Stomach (tissue), 19 donors: ENCODE measurements at regions of chr3 and their contacts with region 1.

Region 1: GRCh38 chr3:43155464-43156121 is 49.7 kb upstream of the POMGNT2 start:
- DNase-seq: peak; percentile 60 to 82
- H3K4me3 ChIP-seq: no peak overlapping the region
- H3K27ac ChIP-seq: no peak overlapping the region
- H3K4me1 ChIP-seq: peaks cover 3 to 18% (median 10%) of the 10 kb centered on the region in 4 donors
- H3K27me3 ChIP-seq: no peaks in the 10 kb centered on the region
- CTCF ChIP-seq: peak in 5 of 7 experiments; percentile 43 to 63 (median 55)
- EP300 ChIP-seq: no peak
- POLR2A ChIP-seq: no peak

Region 2: GRCh38 chr3:42961633-42962032 is 194.0 kb before region 1 on chr3:
- intact Hi-C with region 1: loop called (anchors 5 kb)
- DNase-seq: peak; percentile 29 to 86
- H3K4me3 ChIP-seq: no peak overlapping the region
- H3K27ac ChIP-seq: no peak overlapping the region
- H3K4me1 ChIP-seq: peaks cover 0 to 7% (median 3%) of the 10 kb centered on the region in 4 donors
- H3K27me3 ChIP-seq: no peaks in the 10 kb centered on the region
- CTCF ChIP-seq: peak in 5 of 7 experiments; percentile 37 to 71 (median 62)
- EP300 ChIP-seq: no peak
- POLR2A ChIP-seq: no peak

Region 3: DNA sequence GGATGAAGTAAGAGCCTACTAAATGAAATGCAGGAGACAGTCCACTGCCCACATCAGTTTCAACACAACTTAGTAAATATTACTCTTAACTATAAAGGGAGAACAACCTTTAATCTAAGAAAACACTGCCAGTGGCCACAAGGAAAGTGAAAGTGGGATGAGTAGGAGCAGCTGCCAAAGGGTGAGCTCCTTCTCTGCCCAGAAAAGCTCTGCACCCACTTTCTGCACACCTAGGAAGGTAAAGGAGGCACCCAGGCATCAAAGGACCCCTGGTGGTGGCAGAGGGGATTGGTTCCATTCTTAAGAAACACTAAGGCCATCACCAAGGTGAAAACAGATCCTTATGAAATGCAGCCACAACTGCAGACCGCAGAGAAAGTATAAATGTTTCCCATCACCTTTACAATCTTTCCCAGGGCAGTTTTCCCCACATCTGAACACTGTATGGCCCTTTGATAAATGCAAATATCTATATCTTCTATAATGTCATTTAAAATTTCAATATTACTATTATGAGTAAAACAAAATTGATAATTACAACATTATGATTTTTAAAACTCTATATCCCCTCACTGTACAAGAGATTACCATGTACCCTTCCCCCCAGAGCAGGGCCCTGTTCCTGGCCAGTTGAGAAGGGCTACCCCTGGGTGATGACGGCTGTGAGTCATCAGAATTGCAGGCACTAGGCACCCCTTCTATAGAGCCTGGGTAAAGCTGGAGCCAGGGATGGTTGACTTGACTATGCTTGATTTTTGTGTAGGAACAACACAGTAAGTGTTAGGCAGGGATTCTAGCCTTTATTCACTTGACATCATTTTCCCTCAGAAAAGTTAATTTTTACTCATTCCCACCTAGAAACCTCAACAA is 222.7 kb after region 1 on chr3:
- intact Hi-C with region 1: loop called (anchors 10 kb)
- DNase-seq: peak; percentile 75 to 78
- H3K4me3 ChIP-seq: no peak overlapping the region
- H3K27ac ChIP-seq: peak overlapping the region in 3 of 5 donors; percentile 55 to 79 (median 57)
- H3K4me1 ChIP-seq: peaks cover 0 to 21% (median 8%) of the 10 kb centered on the region in 4 donors
- H3K27me3 ChIP-seq: no peaks in the 10 kb centered on the region
- CTCF ChIP-seq: peak in 5 of 7 experiments; percentile 32 to 75 (median 63)
- EP300 ChIP-seq: no peak
- POLR2A ChIP-seq: no peak